ENCODE measurements at regions of chr6 and their contacts with region 1.

Region 1: GRCh38 chr6:159110013-159110412 is 59.2 kb upstream of the FNDC1 start:
- H3K4me3 ChIP-seq: no peak overlapping the region
- H3K27ac ChIP-seq: no peak overlapping the region
- H3K4me1 ChIP-seq: no peaks in the 10 kb centered on the region
- CTCF ChIP-seq: 0 out of 2 replicates have a peak, but pooled peaks have one; percentile 9

Region 2: GRCh38 chr6:159008656-159009288 is 101.2 kb before region 1 on chr6:
- CTCF ChIA-PET with region 1: interaction called, 20 read pairs
- POLR2A ChIA-PET with region 1: no interaction called
- H3K4me3 ChIP-seq: no peak overlapping the region
- H3K27ac ChIP-seq: no peak overlapping the region
- H3K4me1 ChIP-seq: no peaks in the 10 kb centered on the region
- CTCF ChIP-seq: no peak

Region 3: DNA sequence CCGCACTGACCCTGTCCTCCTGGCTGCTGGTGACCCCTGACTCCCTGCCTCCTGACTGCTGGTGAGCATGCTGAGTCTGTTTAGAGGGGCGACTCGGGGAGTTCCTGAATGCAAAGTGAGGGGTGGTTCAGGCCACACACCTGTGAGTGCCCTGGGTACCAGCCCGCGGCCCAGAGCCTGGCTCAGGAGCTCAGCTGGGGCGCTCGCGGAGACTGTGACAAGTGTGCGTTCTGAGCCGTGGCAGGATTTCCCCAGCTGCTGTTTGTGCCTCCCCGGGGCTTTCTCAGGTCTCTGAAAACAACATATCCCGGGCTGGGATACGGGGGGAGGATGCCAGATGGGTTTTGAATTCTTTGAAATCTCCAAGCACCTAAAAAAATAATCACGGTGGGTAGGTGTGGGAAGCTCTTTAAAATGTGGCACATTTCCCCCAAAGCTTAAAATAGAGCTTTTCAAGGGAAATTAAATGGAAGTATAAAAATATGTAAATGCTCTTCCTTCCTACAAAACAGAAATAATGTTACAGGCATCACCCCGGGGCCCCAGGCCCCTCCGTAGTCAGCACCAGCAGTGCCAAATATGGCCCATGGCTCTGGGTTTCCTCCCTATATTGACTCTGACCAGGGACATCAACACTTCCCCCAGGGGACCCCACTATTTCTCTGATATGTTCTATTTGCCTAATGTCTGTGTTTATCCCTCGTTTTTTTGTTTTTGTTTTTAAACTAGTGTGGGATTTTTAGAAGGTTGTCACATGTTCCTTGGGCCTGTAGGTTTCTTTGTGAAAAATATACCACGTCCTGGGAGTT is 15.4 kb before region 1 on chr6:
- CTCF ChIA-PET with region 1: interaction called, 52 read pairs
- POLR2A ChIA-PET with region 1: no interaction called
- H3K4me3 ChIP-seq: no peak overlapping the region
- H3K27ac ChIP-seq: no peak overlapping the region
- H3K4me1 ChIP-seq: no peaks in the 10 kb centered on the region
- CTCF ChIP-seq: no peak

Region 4: DNA sequence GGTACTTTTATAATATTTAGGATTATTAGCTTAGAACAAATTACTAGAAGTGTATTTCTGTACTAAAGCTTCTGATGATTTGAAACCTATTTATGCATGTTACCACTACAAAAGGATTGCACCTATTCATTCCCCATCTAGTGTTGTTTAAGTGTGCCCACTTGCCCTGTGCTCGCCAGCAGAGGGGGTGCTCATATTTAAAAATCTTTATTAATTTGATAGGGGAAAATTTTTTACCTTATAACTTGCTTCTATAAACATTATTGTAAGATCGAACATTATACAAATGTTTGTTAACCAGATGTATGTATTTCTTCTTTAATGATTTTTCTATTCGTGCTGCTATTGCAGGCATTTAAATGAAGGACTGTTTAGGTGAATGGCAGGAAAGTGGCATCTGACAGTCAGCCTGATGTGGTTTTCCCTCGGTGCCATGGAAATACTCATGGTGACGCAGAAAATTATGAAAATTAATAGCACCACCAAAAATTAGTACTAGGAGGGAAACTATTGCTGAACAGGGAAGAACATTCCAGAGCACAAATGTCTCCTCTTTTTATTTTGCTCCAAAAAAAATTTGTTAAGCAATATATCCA is 15.1 kb after region 1 on chr6:
- CTCF ChIA-PET with region 1: interaction called, 19 read pairs
- POLR2A ChIA-PET with region 1: no interaction called
- H3K4me3 ChIP-seq: no peak overlapping the region
- H3K27ac ChIP-seq: no peak overlapping the region
- H3K4me1 ChIP-seq: no peaks in the 10 kb centered on the region
- CTCF ChIP-seq: no peak

Measured in HEK293 (cell line).